ENCODE measurements at regions of chr10 and their contacts with region 1.

Region 1: GRCh38 chr10:15251791-15252380 is 83.4 kb upstream of the NMT2 start:
- DNase-seq: no peak
- H3K4me3 ChIP-seq: no peak overlapping the region
- H3K27ac ChIP-seq: no peak overlapping the region
- H3K4me1 ChIP-seq: peaks cover 36% of the 10 kb centered on the region
- H3K27me3 ChIP-seq: no peaks in the 10 kb centered on the region
- CTCF ChIP-seq: no peak
- POLR2A ChIP-seq: no peak

Region 2: DNA sequence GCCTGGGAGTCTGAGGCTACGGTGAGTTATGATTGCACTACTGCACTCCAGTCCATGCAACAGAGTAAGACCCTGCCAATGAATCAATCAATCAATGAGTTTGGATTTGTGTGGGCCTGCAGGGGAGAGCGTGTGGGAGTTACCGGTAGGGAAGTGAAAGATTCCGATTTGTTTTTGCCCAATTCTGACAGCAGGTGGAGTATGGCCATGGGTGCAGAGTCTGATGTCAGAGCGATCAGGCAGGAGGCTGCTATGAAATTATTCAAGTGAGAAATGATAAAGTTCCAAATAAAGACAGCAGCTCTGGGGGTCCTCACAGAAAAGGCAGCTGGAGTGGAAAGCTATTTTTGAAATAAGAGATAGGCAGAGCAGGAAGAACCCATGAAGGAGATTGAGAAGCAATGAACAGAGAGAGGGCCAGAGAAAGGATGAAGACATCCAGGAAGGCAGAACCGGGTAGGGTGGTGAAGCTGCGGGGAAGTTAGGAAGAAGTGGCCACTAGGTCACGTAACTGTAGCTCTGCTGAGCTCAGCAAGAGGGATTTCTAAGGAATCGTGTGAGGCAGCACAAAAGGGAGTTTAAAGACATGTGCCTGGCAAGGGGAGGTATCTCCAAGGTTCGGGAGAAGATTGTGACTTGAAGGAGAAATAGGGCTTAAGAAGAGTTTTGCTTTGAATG is 10.3 kb after region 1 on chr10:
- CTCF ChIA-PET with region 1: interaction called, 19 read pairs
- POLR2A ChIA-PET with region 1: no interaction called
- dilution Hi-C with region 1: no loop called
- intact Hi-C with region 1: no loop called
- DNase-seq: peak; percentile 29
- H3K4me3 ChIP-seq: no peak overlapping the region
- H3K27ac ChIP-seq: no peak overlapping the region
- H3K4me1 ChIP-seq: peaks cover 8% of the 10 kb centered on the region
- H3K27me3 ChIP-seq: no peaks in the 10 kb centered on the region
- CTCF ChIP-seq: peak in 1 of 2 donors; percentile 35
- POLR2A ChIP-seq: no peak

Measured in endothelial cell of umbilical vein (primary cell).